Mammary epithelial cell (primary cell): ENCODE measurements at regions of chr12 and their contacts with region 1.

Region 1: GRCh38 chr12:132664206-132665148 is 22.7 kb downstream of the POLE start:
- DNase-seq: no peak
- H3K4me3 ChIP-seq: no peak overlapping the region
- H3K27ac ChIP-seq: no peak overlapping the region
- H3K4me1 ChIP-seq: no peaks in the 10 kb centered on the region
- H3K27me3 ChIP-seq: no peaks in the 10 kb centered on the region
- CTCF ChIP-seq: no peak

Region 2: GRCh38 chr12:132717531-132718387 is 53.3 kb after region 1 on chr12:
- CTCF ChIA-PET with region 1: no interaction called
- dilution Hi-C with region 1: loop called (anchors 5 kb)
- in situ Hi-C with region 1: no loop called
- intact Hi-C with region 1: no loop called
- DNase-seq: no peak
- H3K4me3 ChIP-seq: no peak overlapping the region
- H3K27ac ChIP-seq: no peak overlapping the region
- H3K4me1 ChIP-seq: peaks cover 9% of the 10 kb centered on the region
- H3K27me3 ChIP-seq: no peaks in the 10 kb centered on the region
- CTCF ChIP-seq: no peak

Region 3: GRCh38 chr12:132729541-132730320 is 65.3 kb after region 1 on chr12:
- CTCF ChIA-PET with region 1: no interaction called
- dilution Hi-C with region 1: no loop called
- in situ Hi-C with region 1: no loop called
- intact Hi-C with region 1: no loop called
- DNase-seq: peak; percentile 17
- H3K4me3 ChIP-seq: no peak overlapping the region
- H3K27ac ChIP-seq: no peak overlapping the region
- H3K4me1 ChIP-seq: no peaks in the 10 kb centered on the region
- H3K27me3 ChIP-seq: no peaks in the 10 kb centered on the region
- CTCF ChIP-seq: no peak